SK-N-SH (cell line): ENCODE measurements at regions of chr15 and their contacts with region 1.

Region 1: DNA sequence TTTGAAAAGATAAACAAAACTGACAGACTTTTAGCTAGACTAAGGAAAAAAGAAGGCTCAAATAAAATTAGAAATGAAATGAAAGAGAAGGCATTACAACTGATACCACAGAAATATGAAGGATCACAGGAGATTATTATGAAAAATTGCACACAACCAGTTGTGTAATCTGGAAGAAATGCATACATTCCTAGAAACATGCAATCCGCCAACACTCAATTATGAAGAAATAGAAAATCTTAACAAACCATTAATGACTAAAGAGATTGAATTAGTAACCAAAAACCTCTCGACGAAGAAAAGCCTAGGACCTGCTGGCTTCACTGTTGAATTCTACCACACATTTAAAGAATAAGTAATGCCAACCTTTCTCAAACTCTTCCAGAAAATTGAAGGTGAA is 149.5 kb downstream of the SV2B start:
- DNase-seq: no peak
- H3K4me3 ChIP-seq: no peak overlapping the region
- H3K27ac ChIP-seq: no peak overlapping the region
- H3K4me1 ChIP-seq: peaks cover 0 to 2% of the 10 kb centered on the region in 2 experiments; a peak in 1 of 4 replicates
- H3K27me3 ChIP-seq: no peaks in the 10 kb centered on the region
- CTCF ChIP-seq: no peak
- EP300 ChIP-seq: no peak
- RAD21 ChIP-seq: no peak

Region 2: GRCh38 chr15:91049378-91050127 is 200.0 kb before region 1 on chr15:
- CTCF ChIA-PET with region 1: interaction called, 17 read pairs
- POLR2A ChIA-PET with region 1: no interaction called
- DNase-seq: peak; percentile 64
- H3K4me3 ChIP-seq: peak overlapping the region in 1 of 2 experiments; percentile 11; a peak in 1 of 4 replicates
- H3K27ac ChIP-seq: no peak overlapping the region
- H3K4me1 ChIP-seq: peaks cover 0 to 2% of the 10 kb centered on the region in 2 experiments; a peak in 1 of 4 replicates
- H3K27me3 ChIP-seq: peaks cover 10% of the 10 kb centered on the region; the same call in 1 of the 2 replicates
- CTCF ChIP-seq: peak; percentile 74
- EP300 ChIP-seq: no peak
- RAD21 ChIP-seq: peak; percentile 93

Region 3: DNA sequence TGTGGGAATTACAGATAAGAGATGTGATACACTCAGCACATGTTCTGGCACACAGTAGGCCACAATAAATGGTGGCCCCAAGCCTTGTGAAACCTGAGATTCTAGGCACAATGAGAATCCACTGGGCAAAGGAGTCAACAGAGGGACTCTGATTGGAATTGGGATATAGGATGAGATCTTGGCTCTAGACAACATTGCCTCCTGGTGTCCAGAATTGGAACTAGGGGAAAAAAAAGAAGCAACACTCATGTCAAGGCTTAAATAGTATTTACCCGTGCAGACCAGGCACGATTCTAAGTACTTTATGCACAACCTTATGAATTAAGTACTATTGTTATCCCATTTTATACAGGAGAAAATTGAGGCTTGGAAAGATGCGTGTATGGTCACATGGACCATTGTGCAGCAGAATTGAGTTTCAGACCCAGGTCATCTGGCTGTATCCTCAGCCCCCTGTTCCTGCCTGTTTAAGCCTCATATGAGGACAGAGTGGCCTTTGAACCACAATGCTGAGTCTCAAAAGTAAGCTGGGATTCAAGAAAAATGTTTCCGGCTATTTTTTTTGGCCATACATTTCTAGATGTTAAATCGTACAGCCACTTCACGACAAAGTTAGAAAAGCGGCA is 24.7 kb before region 1 on chr15:
- CTCF ChIA-PET with region 1: interaction called, 12 read pairs
- POLR2A ChIA-PET with region 1: no interaction called
- DNase-seq: peak; percentile 68
- H3K4me3 ChIP-seq: no peak overlapping the region; a peak in 1 of 4 replicates
- H3K27ac ChIP-seq: no peak overlapping the region
- H3K4me1 ChIP-seq: no peaks in the 10 kb centered on the region; a peak in 1 of 4 replicates
- H3K27me3 ChIP-seq: no peaks in the 10 kb centered on the region
- CTCF ChIP-seq: peak; percentile 69
- EP300 ChIP-seq: no peak
- RAD21 ChIP-seq: peak; percentile 84

Region 4: GRCh38 chr15:91238644-91239425 is 10.8 kb before region 1 on chr15:
- CTCF ChIA-PET with region 1: interaction called, 40 read pairs
- POLR2A ChIA-PET with region 1: no interaction called
- DNase-seq: no peak
- H3K4me3 ChIP-seq: no peak overlapping the region
- H3K27ac ChIP-seq: no peak overlapping the region
- H3K4me1 ChIP-seq: no peaks in the 10 kb centered on the region; a peak in 1 of 4 replicates
- H3K27me3 ChIP-seq: no peaks in the 10 kb centered on the region
- CTCF ChIP-seq: no peak
- EP300 ChIP-seq: no peak
- RAD21 ChIP-seq: no peak

Region 5: DNA sequence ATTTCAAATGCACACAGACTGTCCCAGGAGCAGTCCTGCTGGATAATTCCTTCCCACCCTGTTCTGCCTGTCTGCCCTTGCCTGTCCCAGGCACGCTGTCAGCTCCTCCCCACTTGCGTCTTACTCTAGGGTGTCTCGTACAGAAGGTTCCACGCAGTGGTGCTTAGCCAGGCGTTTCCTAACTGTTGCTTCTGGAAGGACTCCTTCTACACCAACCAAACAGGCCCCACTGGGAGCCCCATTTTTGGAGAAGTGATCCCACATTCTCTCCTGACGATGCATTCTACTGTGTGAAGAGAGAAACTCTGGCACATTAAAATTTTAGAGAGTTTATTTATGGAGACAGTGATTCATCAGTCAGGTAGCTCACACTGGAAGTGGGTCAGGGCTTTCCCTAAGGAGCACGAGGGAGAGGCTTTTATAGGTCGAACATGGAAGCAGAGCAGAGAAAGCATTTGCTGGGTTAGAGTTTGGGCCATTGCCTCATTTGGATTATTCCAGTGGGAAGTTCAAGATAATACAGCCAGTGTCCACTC is 14.5 kb after region 1 on chr15:
- CTCF ChIA-PET with region 1: interaction called, 37 read pairs
- POLR2A ChIA-PET with region 1: no interaction called
- DNase-seq: no peak
- H3K4me3 ChIP-seq: no peak overlapping the region
- H3K27ac ChIP-seq: no peak overlapping the region
- H3K4me1 ChIP-seq: no peaks in the 10 kb centered on the region
- H3K27me3 ChIP-seq: no peaks in the 10 kb centered on the region; the same call in 1 of the 2 replicates
- CTCF ChIP-seq: no peak
- EP300 ChIP-seq: no peak
- RAD21 ChIP-seq: no peak

Region 6: GRCh38 chr15:91271565-91272153 is 22.1 kb after region 1 on chr15:
- CTCF ChIA-PET with region 1: interaction called, 22 read pairs
- POLR2A ChIA-PET with region 1: no interaction called
- DNase-seq: peak; percentile 69
- H3K4me3 ChIP-seq: peak overlapping the region in 1 of 2 experiments; percentile 42; a peak in 1 of 4 replicates
- H3K27ac ChIP-seq: no peak overlapping the region
- H3K4me1 ChIP-seq: no peaks in the 10 kb centered on the region
- H3K27me3 ChIP-seq: no peaks in the 10 kb centered on the region
- CTCF ChIP-seq: peak; percentile 86
- EP300 ChIP-seq: no peak
- RAD21 ChIP-seq: peak; percentile 95